ENCODE measurements at regions of chr10 and their contacts with region 1.

Region 1: GRCh38 chr10:132654702-132655661 is 117.4 kb downstream of the INPP5A start:
- DNase-seq: peak; percentile 68
- H3K4me3 ChIP-seq: no peak overlapping the region
- H3K27ac ChIP-seq: no peak overlapping the region
- H3K4me1 ChIP-seq: no peaks in the 10 kb centered on the region
- H3K27me3 ChIP-seq: no peaks in the 10 kb centered on the region
- CTCF ChIP-seq: peak; percentile 92 to 94
- POLR2A ChIP-seq: no peak

Region 2: DNA sequence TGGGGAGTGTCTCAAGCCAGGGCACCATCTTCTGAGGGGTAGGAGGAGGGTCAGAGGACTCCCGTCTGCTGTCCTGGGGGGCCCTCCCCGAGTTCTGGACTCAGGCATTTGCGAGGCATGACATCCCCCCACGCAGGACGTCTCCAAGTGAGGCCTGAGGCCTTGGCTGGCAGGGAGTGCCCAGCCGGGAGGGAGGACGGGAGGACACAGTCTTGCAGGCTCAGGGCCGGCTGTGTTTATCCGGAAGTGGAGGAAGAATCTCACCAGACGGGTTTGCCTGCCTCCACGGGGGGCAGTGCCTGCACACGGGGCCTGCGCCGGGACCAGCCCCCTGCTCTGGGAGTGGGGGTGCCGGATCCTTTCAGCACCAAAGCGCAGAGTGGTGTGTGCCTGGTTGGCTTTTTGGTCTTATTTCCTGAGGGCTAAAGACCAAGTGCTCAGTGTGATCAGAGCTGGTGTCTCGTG is 247.1 kb before region 1 on chr10:
- CTCF ChIA-PET with region 1: no interaction called
- POLR2A ChIA-PET with region 1: no interaction called
- dilution Hi-C with region 1: no loop called
- intact Hi-C with region 1: no loop called
- DNase-seq: peak; percentile 49
- H3K4me3 ChIP-seq: no peak overlapping the region
- H3K27ac ChIP-seq: peak overlapping the region; percentile 10
- H3K4me1 ChIP-seq: peaks cover 23% of the 10 kb centered on the region
- H3K27me3 ChIP-seq: no peaks in the 10 kb centered on the region
- CTCF ChIP-seq: peak in 1 of 2 donors; percentile 3
- POLR2A ChIP-seq: no peak

Region 3: DNA sequence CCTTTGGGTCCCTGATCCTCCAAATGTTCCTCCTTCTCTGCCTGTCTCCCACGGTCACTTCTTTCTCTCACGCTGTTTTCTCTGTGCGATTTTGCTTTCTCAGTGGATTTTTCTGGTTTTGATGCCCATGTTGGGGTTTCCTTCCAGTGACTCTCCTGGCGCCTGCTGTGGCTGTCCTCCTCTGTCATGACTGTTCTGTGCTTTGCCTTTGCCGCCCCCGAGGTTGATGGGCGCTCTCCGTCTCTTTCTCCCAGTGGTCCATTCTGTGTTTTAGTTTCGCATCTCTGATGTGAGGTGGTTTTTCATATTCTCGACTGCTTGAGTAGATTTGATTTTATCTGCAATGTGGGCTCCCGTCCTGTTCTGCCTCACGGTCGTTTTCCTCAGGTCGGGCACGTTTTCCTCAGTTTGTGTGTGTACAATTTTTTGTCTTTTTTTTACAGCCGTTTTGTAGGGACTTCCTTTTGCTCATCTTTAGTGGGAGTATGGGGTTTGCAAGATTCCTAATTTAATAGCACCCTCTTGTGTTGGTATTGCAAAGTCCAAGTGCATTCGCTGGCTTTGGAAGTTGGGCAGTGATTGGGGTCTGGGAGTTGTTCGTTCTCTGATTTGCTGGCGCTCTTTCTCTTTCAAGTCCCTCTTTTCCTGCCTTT is 17.4 kb before region 1 on chr10:
- CTCF ChIA-PET with region 1: no interaction called
- POLR2A ChIA-PET with region 1: no interaction called
- dilution Hi-C with region 1: no loop called
- intact Hi-C with region 1: no loop called
- DNase-seq: peak; percentile 68
- H3K4me3 ChIP-seq: no peak overlapping the region
- H3K27ac ChIP-seq: no peak overlapping the region
- H3K4me1 ChIP-seq: peaks cover 2% of the 10 kb centered on the region
- H3K27me3 ChIP-seq: no peaks in the 10 kb centered on the region
- CTCF ChIP-seq: peak; percentile 60 to 66
- POLR2A ChIP-seq: no peak

Region 4: DNA sequence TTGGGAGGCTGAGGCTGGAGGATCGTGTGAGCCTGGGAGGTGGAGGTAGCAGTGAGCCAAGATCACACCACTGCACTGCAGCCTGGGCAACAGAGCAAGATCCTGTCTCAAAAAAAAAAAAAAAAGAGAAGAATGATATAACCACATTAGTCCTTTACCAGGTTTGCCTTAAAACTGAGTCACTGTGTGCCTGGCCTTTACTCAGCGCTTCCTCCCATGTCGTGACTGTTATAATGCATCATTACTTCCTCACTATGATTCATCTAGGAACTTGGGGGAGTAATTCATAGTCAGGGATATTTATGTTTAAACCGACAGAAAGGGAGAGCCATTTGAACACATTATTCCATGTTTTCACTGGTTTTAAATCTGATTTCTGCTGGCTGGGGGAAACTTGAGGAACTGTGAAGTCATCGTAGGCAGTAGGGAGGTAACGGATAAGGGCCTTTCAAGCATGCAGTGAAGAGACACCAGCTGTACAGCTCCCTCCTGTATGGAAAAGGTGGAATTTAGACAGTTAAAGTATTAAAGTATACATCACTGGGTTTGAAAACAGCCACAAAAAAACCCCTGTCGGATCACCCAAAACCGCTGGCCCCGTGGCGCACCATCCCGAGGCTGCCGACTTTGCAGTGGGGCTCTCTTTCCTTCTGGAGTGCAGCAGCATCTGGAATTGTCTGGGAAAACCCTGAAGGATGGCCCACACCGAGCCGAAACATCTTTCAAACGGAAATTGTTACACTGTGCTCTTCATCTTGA is 11.1 kb after region 1 on chr10:
- CTCF ChIA-PET with region 1: interaction called, 21 read pairs
- POLR2A ChIA-PET with region 1: no interaction called
- dilution Hi-C with region 1: no loop called
- intact Hi-C with region 1: no loop called
- DNase-seq: peak; percentile 96
- H3K4me3 ChIP-seq: peak overlapping the region in 2 of 3 experiments; percentile 34 to 44
- H3K27ac ChIP-seq: peak overlapping the region; percentile 87
- H3K4me1 ChIP-seq: peaks cover 30% of the 10 kb centered on the region
- H3K27me3 ChIP-seq: no peaks in the 10 kb centered on the region
- CTCF ChIP-seq: no peak
- POLR2A ChIP-seq: no peak

Region 5: GRCh38 chr10:132793871-132794849 is 139.2 kb after region 1 on chr10:
- CTCF ChIA-PET with region 1: interaction called, 14 read pairs
- POLR2A ChIA-PET with region 1: no interaction called
- dilution Hi-C with region 1: no loop called
- intact Hi-C with region 1: no loop called
- DNase-seq: no peak
- H3K4me3 ChIP-seq: no peak overlapping the region
- H3K27ac ChIP-seq: no peak overlapping the region
- H3K4me1 ChIP-seq: no peaks in the 10 kb centered on the region
- H3K27me3 ChIP-seq: peaks cover 2 to 8% of the 10 kb centered on the region in 2 experiments
- CTCF ChIP-seq: no peak
- POLR2A ChIP-seq: no peak

Region 6: GRCh38 chr10:132893090-132893489 is 238.1 kb after region 1 on chr10:
- CTCF ChIA-PET with region 1: interaction called, 5 read pairs
- POLR2A ChIA-PET with region 1: no interaction called
- dilution Hi-C with region 1: no loop called
- intact Hi-C with region 1: loop called (anchors 1 kb)
- DNase-seq: no peak
- H3K4me3 ChIP-seq: no peak overlapping the region
- H3K27ac ChIP-seq: no peak overlapping the region
- H3K4me1 ChIP-seq: no peaks in the 10 kb centered on the region
- H3K27me3 ChIP-seq: no peaks in the 10 kb centered on the region
- CTCF ChIP-seq: no peak
- POLR2A ChIP-seq: no peak

Region 7: DNA sequence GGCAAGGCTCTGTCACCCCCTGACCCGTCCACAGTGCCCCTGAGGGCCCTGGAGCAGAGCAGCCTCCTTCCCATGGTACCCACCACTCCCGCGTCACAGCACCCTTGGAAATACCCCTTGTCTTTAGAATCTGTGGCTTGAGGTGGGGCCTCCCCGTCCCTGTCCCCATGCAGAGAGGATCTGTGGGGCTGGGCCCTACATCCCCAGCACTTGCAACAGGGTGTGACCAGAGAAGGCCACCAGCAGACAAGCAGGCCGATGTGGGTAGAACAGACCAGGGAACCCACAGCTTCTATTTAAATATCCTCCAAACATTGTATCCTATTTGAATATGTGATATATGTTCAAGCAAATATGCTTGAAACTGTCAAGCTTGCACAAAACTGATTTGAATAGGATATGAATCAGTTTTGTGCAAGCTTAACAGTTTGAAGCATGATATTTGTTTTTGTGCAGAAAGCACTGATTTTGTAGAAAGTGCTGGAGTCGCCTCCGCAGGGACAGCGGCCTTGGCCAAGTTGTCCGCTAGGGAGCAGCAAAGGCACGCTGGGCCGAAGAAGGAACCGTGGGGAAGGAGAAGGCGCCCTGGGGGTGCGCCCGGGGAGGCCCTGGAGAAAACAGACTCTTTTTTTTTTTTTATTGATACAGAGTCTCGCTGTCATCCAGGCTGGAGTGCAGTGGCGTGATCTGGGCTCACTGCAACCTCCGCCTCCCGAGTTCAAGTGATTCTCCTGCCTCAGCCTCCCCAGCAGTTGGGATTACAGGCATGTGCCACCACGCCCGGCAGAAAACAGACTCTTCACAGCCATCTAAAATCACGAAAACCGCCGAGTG is 285.2 kb after region 1 on chr10:
- CTCF ChIA-PET with region 1: no interaction called
- POLR2A ChIA-PET with region 1: no interaction called
- dilution Hi-C with region 1: no loop called
- intact Hi-C with region 1: loop called (anchors 2 kb)
- DNase-seq: peak; percentile 30
- H3K4me3 ChIP-seq: no peak overlapping the region
- H3K27ac ChIP-seq: no peak overlapping the region
- H3K4me1 ChIP-seq: no peaks in the 10 kb centered on the region
- H3K27me3 ChIP-seq: no peaks in the 10 kb centered on the region
- CTCF ChIP-seq: peak; percentile 72 to 84
- POLR2A ChIP-seq: no peak